ENCODE measurements at regions of chr1 and their contacts with region 1.

Region 1: GRCh38 chr1:178938959-178939317 is 68.1 kb upstream of the ANGPTL1 start:
- DNase-seq: peak; percentile 27
- ATAC-seq: no peak
- H3K4me3 ChIP-seq: no peak overlapping the region
- H3K27ac ChIP-seq: no peak overlapping the region
- H3K4me1 ChIP-seq: peaks cover 7% of the 10 kb centered on the region
- H3K27me3 ChIP-seq: no peaks in the 10 kb centered on the region
- CTCF ChIP-seq: no peak
- POLR2A ChIP-seq: no peak
- RAD21 ChIP-seq: no peak

Region 2: GRCh38 chr1:178885869-178886268 is 53.1 kb before region 1 on chr1:
- CTCF ChIA-PET with region 1: no interaction called
- POLR2A ChIA-PET with region 1: no interaction called
- dilution Hi-C with region 1: no loop called
- in situ Hi-C with region 1: no loop called
- intact Hi-C with region 1: loop called (anchors 5 kb)
- DNase-seq: no peak
- ATAC-seq: no peak
- H3K4me3 ChIP-seq: no peak overlapping the region
- H3K27ac ChIP-seq: no peak overlapping the region
- H3K4me1 ChIP-seq: no peaks in the 10 kb centered on the region
- H3K27me3 ChIP-seq: no peaks in the 10 kb centered on the region
- CTCF ChIP-seq: no peak
- POLR2A ChIP-seq: no peak
- RAD21 ChIP-seq: no peak

Measured in IMR-90 (cell line).